A673 (cell line): ENCODE measurements at regions of chr20 and their contacts with region 1.

Region 1: GRCh38 chr20:54199721-54200176 is 8.1 kb upstream of the PFDN4 start:
- DNase-seq: peak; percentile 79
- H3K4me3 ChIP-seq: no peak overlapping the region
- H3K27ac ChIP-seq: no peak overlapping the region
- H3K4me1 ChIP-seq: no peaks in the 10 kb centered on the region
- H3K27me3 ChIP-seq: no peaks in the 10 kb centered on the region
- CTCF ChIP-seq: peak; percentile 93

Region 2: DNA sequence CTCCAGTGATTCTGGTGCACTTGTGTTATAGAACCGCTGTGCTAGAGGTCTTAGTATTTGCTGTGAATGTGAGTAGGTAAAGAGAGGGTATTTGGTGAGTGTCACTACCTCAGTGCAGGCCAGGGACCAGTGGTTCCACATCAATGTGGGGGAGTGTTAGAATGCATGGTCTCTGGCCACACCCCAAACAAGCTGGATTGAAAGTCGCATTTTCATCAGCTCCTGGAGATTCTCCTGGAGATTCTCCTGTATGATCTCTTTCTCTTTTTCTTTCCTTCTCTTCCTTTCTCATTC is 102.6 kb before region 1 on chr20:
- CTCF ChIA-PET with region 1: interaction called, 7 read pairs
- POLR2A ChIA-PET with region 1: no interaction called
- intact Hi-C with region 1: loop called (anchors 1 kb)
- DNase-seq: no peak
- H3K4me3 ChIP-seq: no peak overlapping the region
- H3K27ac ChIP-seq: no peak overlapping the region
- H3K4me1 ChIP-seq: peaks cover 25% of the 10 kb centered on the region
- H3K27me3 ChIP-seq: no peaks in the 10 kb centered on the region
- CTCF ChIP-seq: no peak

Region 3: GRCh38 chr20:54140927-54141566 is 58.7 kb before region 1 on chr20:
- CTCF ChIA-PET with region 1: no interaction called
- POLR2A ChIA-PET with region 1: no interaction called
- intact Hi-C with region 1: no loop called
- DNase-seq: no peak
- H3K4me3 ChIP-seq: no peak overlapping the region
- H3K27ac ChIP-seq: no peak overlapping the region
- H3K4me1 ChIP-seq: no peaks in the 10 kb centered on the region
- H3K27me3 ChIP-seq: no peaks in the 10 kb centered on the region
- CTCF ChIP-seq: no peak

Region 4: DNA sequence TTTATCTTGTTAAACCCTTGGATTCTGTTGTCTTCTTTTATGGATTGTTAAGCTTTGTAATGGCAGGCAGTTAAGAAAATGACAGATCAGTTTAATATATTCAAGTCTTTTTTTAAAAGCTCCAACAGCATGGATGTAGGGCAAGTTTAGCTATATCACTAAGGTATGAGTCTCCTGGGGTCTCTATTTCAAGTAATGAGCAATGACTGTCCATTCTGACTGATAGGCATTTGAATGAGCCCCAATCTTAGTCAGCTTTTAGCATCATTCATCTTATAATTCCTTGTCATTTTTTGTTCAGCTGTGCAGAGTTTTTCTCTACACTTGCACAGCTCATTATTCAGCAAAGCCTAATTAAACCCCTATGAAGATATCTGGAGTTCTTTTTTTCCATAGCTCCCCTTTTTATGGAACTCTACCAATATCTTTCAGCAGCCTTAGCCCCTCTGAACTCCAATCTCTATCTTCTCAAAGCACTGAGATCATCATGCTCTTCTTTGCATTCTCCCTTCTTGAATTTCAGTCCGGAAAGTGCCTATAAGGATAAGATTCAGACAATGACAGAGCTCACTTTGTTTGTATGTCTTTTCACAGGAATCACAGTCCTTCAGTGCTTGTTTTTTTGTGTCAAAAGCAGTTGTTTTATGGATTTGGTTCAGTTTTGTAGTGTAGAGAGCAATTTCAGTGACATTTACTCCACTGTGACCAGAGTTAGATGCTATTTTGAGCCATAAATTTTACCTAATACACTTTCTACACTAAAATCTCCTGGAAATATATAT is 178.4 kb after region 1 on chr20:
- CTCF ChIA-PET with region 1: no interaction called
- POLR2A ChIA-PET with region 1: no interaction called
- intact Hi-C with region 1: no loop called
- DNase-seq: no peak
- H3K4me3 ChIP-seq: no peak overlapping the region
- H3K27ac ChIP-seq: no peak overlapping the region
- H3K4me1 ChIP-seq: no peaks in the 10 kb centered on the region
- H3K27me3 ChIP-seq: no peaks in the 10 kb centered on the region
- CTCF ChIP-seq: no peak